GM18951 (cell line): ENCODE measurements at regions of chr7 and their contacts with region 1.

Region 1: DNA sequence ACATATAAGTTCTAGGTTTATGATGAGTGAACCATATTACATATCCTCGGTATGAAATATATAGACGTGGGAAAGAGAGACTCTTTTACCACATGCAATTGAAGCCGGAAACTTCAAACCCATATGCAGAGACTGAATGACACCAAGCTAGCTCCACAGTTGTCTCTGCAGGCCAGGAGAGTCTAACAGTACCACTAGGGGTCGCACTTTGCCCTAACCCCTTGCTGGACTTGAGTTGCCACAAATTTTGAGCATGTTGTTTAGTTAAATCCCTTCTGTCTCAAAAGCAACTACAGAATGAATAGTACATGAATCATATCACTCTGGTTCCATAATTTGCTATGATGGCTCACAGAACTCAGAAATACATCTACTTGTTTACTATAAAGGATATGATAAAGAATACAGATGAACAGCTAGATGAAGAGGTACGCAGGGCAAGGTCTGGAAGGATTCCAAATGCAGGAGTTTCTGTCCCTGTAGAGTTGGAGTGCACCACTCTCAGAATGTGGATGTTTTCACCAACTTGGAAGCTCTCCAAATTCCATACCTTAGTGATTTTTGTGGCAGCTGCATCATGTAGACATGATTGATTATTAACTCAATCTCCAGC is 112.4 kb upstream of the YAE1 start:
- POLR2A ChIP-seq: no peak

Region 2: GRCh38 chr7:38801786-38802185 is 652.1 kb before region 1 on chr7:
- in situ Hi-C with region 1: loop called (anchors 10 kb)
- POLR2A ChIP-seq: no peak

Region 3: DNA sequence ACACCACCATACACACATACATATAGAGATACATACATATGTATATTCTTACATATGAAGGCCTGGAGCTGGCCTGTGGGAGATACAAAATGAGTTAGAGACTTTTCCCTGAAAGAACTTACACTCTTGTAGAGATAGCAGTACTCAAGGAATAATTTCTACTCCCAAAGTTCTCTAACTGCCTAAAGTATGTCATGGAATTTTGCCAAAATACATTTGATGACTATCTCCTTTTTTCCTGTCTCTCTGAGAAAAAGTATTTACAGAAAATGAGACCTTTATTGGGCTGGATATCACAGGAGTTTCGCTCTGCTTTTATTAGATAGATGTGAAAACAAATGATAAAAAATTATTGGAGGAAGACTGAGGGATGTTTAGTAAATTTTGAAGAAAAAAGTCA is 256.0 kb before region 1 on chr7:
- in situ Hi-C with region 1: no loop called
- POLR2A ChIP-seq: no peak